ENCODE measurements at regions of chr12 and their contacts with region 1.

Region 1: DNA sequence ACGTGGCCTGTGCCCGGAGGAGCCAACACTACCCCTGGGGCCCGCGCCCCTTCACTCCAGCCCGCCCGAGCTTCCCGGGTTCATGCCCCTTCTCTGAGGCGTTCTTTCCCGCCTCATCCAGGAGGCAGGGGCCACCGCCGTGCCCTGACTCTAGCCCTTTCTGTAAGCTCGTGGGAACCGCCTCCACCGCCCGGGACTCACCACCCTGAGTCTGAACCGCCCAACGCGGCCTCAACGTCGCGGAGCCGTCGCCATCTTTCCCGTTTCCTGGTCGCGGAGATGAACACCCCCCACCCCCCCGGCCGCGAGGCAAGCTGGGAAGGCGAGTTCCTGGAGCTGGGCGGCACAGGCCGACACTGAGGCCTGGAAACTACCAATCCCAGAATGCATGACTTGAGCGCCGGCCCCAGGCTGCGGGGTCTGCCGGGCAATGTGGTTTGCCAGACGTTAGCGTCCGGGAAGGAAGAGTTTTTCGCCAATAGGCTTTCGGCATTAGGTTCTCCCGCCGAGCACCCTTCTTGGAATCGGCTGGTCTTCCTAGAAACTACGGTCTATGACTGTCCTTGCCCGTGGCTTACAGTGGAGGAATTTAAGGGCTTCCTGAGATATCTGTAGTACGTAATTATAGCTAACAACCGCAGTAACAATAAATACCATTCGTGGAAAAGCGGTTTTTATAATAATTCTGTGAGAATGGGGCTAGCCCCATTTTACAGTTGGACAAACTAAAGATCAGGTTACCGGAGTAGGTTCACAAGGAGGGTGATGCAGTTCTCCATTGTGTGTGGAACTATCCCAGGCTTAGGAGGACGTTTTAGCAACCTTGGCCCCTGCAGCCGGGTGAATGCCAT is at the start of gene DDX23:
- DNase-seq: peak; percentile 91
- H3K4me3 ChIP-seq: peak within 1 kb of the TSS; percentile 93
- H3K27me3 ChIP-seq: peaks cover 4% of the 10 kb centered on the region; the same call in 1 of the 2 replicates
- CTCF ChIP-seq: no peak
- polyA plus RNA-seq, gene DDX23: 54.5 and 59.4 TPM in 2 replicates

Region 2: DNA sequence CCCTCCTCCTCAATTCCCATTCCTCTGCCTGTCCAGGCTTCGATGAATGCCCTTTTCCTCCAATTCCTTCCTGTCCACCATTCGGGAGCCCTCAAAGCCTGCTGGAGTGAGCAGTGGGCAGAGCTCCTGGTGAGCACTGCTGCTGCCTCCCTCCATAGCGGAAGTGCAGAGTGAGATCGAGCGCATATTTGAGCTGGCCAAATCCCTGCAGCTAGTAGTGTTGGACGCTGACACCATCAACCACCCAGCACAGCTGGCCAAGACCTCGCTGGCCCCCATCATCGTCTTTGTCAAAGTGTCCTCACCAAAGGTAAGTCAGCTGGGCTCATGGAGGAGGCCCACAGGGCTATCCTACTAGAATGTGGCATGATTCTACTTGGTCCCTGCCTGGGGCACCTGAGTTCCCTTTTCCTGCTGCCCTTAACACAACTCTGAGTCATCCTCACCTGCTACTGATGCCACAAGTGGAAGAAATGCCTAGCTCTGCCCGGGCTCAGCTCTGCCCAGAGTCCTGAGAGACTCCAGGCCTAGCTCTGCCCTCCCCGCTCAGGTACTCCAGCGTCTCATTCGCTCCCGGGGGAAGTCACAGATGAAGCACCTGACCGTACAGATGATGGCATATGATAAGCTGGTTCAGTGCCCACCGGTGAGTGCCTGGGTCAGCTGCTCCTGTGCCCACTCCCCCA is 25.8 kb before region 1 on chr12:
- CTCF ChIA-PET with region 1: interaction called, 17 read pairs
- POLR2A ChIA-PET with region 1: no interaction called
- DNase-seq: no peak
- H3K4me3 ChIP-seq: no peak overlapping the region
- H3K27me3 ChIP-seq: no peaks in the 10 kb centered on the region
- CTCF ChIP-seq: no peak

Region 3: DNA sequence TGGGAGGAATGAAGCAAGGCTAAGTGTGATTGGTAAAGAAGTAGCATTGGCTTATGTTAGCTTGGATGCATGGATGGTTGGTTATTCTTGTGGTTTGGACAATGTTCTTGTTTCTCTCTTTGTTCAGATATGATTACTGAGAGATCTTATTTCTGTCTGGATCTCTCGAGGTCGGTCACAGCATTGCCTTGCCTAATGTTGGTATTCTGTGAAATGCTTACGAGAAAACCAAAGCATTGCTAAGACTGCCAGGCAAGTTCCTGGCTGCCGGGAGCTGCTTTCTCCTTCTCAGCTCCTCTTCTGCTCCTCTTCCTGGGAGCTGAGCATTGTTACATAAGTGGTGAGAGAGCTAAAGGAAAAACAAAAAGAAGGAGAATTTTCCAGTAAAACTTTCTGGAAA is 21.0 kb after region 1 on chr12:
- CTCF ChIA-PET with region 1: interaction called, 67 read pairs
- POLR2A ChIA-PET with region 1: no interaction called
- DNase-seq: no peak
- H3K4me3 ChIP-seq: no peak overlapping the region
- H3K27me3 ChIP-seq: peaks cover 3% of the 10 kb centered on the region; the same call in 1 of the 2 replicates
- CTCF ChIP-seq: no peak

Region 4: DNA sequence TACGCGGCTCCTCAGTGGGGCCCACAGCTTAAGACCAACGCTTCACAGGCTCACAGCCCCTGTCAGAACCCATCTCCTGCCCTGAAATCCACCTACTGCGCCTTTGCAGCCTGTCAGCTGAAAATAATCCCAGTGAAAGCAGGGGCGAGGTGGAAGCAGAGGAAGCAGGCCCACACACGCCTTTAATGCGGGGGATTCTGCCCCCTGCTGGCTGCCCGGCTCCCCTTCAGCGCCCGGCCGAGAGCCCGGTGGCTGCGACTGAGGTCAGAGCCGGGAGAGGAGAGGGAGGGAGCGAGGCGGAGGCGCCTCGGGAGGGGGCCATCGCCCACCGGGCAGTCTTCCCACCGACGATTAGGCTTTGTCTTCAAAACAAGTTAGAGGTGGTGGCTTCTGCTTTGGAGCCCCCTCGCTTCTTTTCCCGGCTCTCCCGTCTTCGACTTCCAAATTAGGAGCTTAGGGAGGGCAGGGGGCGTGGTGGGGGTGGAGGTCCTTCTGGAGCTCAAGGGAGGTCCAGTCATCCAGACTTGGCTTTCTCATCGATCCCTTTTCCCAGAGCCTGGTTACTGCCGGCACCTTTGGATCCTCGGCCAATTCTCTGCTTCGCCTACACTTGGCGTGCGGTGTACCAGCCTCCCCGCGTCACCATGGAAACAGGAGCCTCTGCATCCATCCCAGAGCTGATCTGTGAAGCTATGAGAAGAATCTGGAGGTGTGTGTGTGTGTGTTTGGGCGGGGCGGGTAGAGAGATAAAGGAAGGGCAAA is 38.7 kb after region 1 on chr12:
- CTCF ChIA-PET with region 1: interaction called, 243 read pairs
- POLR2A ChIA-PET with region 1: no interaction called
- DNase-seq: no peak
- H3K4me3 ChIP-seq: peak overlapping the region; percentile 24
- H3K27me3 ChIP-seq: peaks cover 5% of the 10 kb centered on the region; the same call in 1 of the 2 replicates
- CTCF ChIP-seq: peak; percentile 97

Region 5: DNA sequence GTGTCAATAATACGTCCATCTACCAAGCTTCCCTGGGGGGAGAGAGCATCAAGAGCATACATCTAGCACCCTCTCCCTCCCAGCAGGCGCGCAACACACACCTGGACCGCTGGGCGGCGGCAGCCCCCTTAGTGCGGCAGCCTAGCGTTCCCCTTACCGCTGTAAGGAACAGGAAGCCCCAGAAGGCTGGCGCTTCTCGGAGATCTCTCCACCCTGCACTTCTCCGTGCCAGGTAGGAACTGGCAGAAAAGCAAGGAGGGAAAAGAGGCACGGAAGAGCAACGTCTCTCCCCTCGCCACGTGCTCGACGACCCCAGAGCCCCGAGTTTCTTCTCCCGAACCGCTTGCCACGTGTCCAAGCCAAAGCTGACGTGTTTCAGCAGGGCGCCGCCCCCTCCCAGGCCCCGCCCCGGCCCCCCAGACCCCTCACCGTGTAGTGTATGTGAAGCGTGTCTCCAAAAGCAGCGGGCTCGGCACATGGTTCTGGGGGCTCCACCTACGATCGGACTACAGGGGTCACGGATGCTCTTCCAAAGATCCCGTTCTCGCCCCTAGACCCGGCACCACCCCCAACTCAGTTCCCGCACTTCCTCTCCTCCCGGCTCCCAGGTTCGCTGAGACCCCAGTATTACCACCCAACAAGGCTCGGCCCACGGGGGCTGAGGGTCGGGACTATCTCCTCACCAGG is 72.7 kb after region 1 on chr12:
- CTCF ChIA-PET with region 1: interaction called, 25 read pairs
- POLR2A ChIA-PET with region 1: no interaction called
- DNase-seq: no peak
- H3K4me3 ChIP-seq: peak overlapping the region; percentile 80
- H3K27me3 ChIP-seq: no peaks in the 10 kb centered on the region
- CTCF ChIP-seq: peak; percentile 70

Region 6: DNA sequence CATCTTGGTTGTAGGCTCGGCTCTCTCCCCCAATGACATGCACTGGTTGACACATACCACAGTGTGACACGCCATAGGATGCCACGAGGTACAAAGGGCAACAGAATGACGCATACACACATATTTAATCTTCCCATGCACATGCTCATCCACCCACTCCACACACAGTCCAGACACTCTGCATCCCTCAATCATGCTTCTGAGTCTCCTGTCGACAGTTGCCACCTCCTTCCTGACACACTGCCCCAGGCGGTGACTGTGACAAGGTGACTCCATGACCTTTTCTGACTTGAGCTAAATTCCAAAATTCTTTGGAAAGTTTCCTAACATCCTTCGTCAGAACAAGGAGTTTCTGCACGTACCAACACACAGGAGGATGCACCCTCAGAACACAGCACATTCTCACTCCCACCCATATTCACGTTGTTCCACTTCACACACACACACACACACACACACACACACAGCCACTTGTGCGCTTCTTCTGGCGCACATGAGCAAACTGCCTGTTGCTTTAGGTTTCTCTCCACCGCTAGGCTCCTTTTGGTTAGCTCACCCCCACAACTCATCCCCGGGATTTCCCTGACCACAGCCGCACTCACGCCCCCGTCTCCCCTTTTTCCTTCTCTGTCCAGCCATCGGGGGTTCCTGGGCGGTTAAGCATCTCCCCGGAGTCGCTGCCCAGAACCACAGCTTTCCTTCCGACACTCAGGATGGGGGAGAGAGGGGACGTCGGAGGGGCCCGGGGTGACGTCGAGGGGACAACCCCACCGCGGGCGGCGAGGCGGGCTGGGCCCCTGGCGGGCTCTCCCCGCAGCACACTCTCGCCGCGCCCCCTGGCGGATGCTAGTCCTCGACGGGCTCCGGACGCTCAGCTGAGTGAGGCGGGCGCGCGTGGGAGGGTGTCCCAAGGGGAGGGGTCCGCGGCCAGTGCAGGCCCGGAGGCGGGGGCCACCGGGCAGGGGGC is 125.5 kb after region 1 on chr12:
- CTCF ChIA-PET with region 1: interaction called, 17 read pairs
- POLR2A ChIA-PET with region 1: no interaction called
- DNase-seq: no peak
- H3K4me3 ChIP-seq: no peak overlapping the region
- H3K27me3 ChIP-seq: peaks cover 47% of the 10 kb centered on the region
- CTCF ChIP-seq: peak; percentile 62

Region 7: DNA sequence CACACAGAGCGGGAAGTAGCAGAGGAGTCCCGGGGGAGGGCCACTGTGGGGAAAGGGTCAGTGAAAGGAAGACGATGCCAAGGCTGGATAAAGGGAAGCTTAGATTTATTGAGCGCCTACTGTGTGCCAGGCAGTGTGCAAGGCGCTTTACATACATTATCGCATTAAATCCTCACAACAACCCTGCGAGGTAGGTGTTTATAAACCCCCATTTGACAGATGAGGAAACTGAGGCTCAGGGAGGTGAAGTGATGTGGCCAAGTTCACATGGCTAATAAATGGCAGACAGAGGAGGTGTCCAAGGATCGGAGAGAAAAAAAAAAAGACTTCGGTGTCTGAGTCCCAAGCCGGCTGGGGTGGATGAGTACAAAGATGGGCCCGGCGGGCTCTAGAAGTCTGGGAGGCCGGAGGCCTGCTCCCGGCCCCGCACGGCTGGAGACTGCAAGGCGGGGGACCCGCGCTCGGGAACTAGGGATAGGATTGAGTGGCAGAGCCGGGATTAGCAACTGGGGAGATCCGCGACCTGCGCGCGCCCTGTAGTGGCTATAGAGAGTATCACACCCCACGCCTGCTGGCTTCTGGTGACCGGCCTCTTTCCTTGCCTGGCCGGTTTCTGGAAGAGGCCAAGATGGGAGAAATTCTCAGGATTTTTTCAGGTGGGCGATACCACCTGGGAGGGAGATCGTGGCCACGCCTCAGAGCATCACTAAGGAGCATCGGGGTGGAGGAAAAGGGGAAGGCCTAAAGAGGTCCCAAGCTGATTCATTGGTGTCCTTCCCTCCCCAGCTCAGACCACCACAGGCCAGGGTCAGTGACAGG is 143.2 kb after region 1 on chr12:
- CTCF ChIA-PET with region 1: interaction called, 24 read pairs
- POLR2A ChIA-PET with region 1: no interaction called
- DNase-seq: no peak
- H3K4me3 ChIP-seq: no peak overlapping the region
- H3K27me3 ChIP-seq: peaks cover 9% of the 10 kb centered on the region
- CTCF ChIP-seq: peak; percentile 83

Measured in BJ (cell line).